Endothelial cell of umbilical vein (primary cell): ENCODE measurements at regions of chr10 and their contacts with region 1.

Region 1: DNA sequence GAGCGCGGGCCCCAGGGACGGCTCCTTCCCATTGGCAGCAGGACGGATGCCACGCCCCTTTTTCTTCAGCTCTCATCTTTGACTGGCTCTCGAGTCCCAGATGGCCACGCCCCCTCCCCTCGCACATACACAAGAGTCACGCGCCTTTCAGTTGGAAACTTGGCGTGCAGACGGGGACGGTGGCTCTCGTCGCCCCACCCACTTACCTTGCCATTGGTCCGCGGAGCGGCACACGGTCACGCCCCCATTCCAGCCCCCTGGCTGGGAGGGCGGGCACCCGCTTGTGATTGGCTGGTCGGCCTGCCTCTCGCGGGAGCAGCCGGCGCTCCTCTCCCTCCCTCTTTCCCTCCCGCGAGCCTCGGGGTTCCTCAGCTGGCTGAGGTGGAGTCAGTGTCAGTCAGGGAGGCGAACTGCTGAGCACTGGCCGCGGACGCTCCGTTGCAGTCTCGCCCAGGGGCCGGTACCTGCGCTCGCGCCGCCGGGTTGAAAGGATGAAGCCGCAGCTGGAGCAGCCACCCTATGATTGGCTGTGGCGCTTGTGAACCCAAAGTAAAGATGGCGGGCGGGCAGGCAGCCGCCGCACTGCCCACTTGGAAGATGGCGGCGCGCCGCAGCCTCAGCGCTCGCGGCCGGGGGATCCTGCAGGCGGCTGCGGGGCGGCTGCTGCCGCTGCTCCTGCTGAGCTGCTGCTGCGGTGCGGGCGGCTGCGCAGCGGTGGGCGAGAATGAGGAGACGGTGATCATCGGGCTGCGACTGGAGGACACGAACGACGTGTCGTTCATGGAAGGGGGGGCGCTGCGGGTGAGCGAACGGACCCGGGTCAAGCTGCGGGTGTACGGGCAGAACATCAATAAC is at the start of gene CNNM2:
- DNase-seq: peak; percentile 100
- H3K4me3 ChIP-seq: peak within 1 kb of the TSS; percentile 43 to 76 (median 47)
- H3K27ac ChIP-seq: peak within 1 kb of the TSS; percentile 57
- H3K4me1 ChIP-seq: peaks cover 10% of the 10 kb centered on the region
- H3K27me3 ChIP-seq: peaks cover 13 to 15% of the 10 kb centered on the region in 2 experiments
- CTCF ChIP-seq: no peak
- POLR2A ChIP-seq: peak; percentile 59
- total RNA-seq, gene CNNM2: 3.0 and 3.2 TPM in 2 replicates

Region 2: DNA sequence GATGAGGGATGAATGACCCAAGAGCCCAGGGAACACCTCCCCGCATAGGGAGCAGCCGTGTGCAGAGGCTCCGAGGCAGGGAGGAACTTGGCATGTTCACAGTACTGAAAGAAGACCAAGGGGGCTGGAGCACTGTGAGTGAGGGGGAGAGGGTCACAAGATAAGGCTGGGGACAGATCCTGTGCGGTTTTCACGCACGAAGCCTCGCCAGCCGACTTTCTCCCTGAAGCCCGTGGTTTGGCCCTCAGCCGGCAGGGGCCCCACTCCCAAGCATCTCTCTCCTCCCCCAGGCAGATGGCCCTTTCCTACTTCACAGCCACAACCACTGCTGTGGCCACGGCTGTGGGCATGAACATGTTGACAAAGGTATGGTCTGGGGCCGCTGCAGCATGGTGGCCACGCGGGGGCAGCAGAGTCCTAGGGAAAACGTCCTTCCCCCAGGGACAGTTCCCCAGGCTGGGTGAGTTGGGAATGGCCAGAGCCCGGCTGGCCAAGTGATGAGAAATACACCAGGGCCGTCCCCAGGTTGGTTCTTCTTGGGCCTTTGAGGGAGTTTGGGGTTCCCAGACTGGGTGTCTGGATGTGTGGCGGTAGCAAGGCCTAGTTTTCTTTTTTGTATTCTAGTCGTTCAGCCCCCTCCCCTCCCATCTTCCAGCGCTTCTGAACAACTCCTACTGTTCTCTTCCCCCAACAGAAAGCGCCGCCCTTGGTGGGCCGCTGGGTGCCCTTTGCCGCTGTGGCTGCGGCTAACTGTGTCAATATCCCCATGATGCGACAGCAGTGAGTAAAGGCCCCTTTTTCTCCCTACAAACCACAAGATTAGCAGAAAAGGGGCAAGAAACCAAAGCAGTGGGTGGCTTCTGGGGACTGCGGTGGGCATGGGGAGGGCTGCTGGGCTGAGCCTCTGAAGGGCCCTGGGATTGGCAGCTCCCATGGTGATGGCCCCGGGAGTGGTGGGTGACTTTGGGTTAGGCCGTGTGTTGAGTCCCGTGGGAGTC is 188.9 kb before region 1 on chr10:
- CTCF ChIA-PET with region 1: interaction called, 4 read pairs
- POLR2A ChIA-PET with region 1: no interaction called
- dilution Hi-C with region 1: no loop called
- intact Hi-C with region 1: loop called (anchors 5 kb)
- DNase-seq: peak; percentile 78
- H3K4me3 ChIP-seq: no peak overlapping the region
- H3K27ac ChIP-seq: no peak overlapping the region
- H3K4me1 ChIP-seq: no peaks in the 10 kb centered on the region
- H3K27me3 ChIP-seq: no peaks in the 10 kb centered on the region
- CTCF ChIP-seq: peak; percentile 90 to 92
- POLR2A ChIP-seq: no peak

Region 3: GRCh38 chr10:102743588-102744373 is 174.4 kb before region 1 on chr10 and contains the start of gene WBP1L:
- CTCF ChIA-PET with region 1: interaction called, 3 read pairs
- POLR2A ChIA-PET with region 1: no interaction called
- dilution Hi-C with region 1: no loop called
- intact Hi-C with region 1: loop called (anchors 5 kb)
- DNase-seq: peak; percentile 100
- H3K4me3 ChIP-seq: peak within 1 kb of the TSS; percentile 43 to 91 (median 52)
- H3K27ac ChIP-seq: peak within 1 kb of the TSS; percentile 35
- H3K4me1 ChIP-seq: peaks cover 15% of the 10 kb centered on the region
- H3K27me3 ChIP-seq: no peaks in the 10 kb centered on the region
- CTCF ChIP-seq: no peak
- POLR2A ChIP-seq: peak; percentile 45
- total RNA-seq, gene WBP1L: 43.6 and 46.0 TPM in 2 replicates

Region 4: GRCh38 chr10:102835007-102835482 is 83.1 kb before region 1 on chr10:
- CTCF ChIA-PET with region 1: interaction called, 34 read pairs
- POLR2A ChIA-PET with region 1: no interaction called
- dilution Hi-C with region 1: no loop called
- intact Hi-C with region 1: no loop called
- DNase-seq: peak; percentile 80
- H3K4me3 ChIP-seq: no peak overlapping the region
- H3K27ac ChIP-seq: no peak overlapping the region
- H3K4me1 ChIP-seq: no peaks in the 10 kb centered on the region
- H3K27me3 ChIP-seq: peaks cover 0 to 4% of the 10 kb centered on the region in 2 experiments
- CTCF ChIP-seq: peak; percentile 82 to 85
- POLR2A ChIP-seq: no peak

Region 5: DNA sequence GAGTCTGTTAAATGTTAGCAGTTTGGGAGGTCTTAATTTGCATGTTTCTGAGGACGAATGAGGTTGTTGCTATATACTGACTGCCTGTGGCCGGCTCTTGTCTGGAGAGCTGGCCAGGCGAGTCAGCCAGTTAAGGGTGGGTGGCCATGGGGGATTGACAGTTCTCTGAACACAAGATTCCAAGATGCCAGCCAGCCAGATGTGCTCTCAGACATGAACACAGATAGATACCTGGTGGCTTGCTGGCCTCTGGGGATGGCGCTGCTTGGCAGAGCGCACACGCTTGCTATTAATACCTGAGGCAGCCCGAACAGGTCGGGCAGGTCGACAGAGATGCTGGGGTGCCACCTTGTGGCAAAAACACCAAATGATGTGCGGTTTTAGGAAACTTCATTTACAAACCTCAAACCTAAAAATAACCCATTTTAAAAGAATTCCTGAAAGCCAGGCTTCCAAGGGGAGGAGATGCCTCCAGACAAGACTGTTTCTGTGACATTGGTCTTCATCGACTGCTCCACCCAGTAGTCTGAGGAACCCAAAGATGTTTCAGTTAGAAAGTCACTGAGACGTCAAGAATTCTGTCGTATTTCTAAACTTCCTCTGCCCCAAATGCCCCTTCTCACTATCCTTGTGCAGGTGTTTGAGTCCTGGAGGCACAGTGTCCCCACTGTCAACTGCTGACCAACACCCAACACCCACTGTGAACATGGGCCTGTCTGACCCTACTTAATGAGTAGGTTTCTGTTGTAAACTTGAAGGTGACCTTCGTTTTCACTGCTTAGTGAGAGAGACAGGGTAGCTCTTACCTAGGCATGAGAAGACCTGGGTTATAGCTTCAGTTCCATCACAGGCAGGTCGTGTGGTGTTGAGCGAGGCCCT is 151.5 kb after region 1 on chr10:
- CTCF ChIA-PET with region 1: interaction called, 40 read pairs
- POLR2A ChIA-PET with region 1: no interaction called
- dilution Hi-C with region 1: no loop called
- intact Hi-C with region 1: loop called (anchors 1 kb)
- DNase-seq: peak; percentile 56
- H3K4me3 ChIP-seq: no peak overlapping the region
- H3K27ac ChIP-seq: no peak overlapping the region
- H3K4me1 ChIP-seq: peaks cover 2% of the 10 kb centered on the region
- H3K27me3 ChIP-seq: no peaks in the 10 kb centered on the region
- CTCF ChIP-seq: peak; percentile 49 to 55
- POLR2A ChIP-seq: no peak

Region 6: DNA sequence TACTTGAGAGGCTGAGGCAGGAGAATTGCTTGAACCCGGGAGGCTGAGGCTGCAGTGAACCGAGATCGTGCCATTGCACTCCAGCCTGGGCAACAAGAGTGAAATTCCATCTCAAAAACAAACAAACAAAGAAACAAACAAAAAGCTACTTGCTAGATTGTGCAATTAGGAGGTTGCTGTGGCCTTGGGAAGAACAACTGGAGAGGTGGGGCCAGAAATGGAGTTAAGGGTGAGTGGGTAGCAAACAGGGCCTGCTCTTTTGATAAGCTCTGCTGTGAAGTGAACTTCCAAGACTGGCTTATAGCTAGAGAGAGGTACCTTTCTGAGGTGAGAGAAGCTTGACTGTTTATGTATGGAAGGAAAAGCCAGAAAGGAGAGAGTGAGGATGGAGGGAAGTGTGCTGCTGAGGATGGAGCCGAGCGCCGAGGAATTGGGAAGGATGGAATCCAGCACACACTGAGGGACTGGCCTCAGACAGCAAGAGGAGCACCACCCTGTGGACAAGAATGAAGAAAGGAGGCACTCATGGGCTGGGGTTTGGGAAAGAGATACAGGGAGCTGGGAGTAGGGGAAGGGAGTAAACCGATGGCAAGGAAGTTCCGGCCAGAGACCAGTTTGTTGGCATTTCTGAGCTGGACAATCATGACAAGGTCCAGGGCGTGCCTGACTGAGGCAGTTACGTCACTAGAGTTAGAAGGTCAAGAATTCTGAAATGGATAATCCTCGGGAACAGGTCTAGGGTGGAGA is 320.5 kb after region 1 on chr10:
- CTCF ChIA-PET with region 1: interaction called, 211 read pairs
- POLR2A ChIA-PET with region 1: interaction called, 3 read pairs
- dilution Hi-C with region 1: no loop called
- intact Hi-C with region 1: no loop called
- DNase-seq: peak; percentile 52
- H3K4me3 ChIP-seq: no peak overlapping the region
- H3K27ac ChIP-seq: no peak overlapping the region
- H3K4me1 ChIP-seq: peaks cover 13% of the 10 kb centered on the region
- H3K27me3 ChIP-seq: no peaks in the 10 kb centered on the region
- CTCF ChIP-seq: peak; percentile 25 to 50
- POLR2A ChIP-seq: no peak

Region 7: DNA sequence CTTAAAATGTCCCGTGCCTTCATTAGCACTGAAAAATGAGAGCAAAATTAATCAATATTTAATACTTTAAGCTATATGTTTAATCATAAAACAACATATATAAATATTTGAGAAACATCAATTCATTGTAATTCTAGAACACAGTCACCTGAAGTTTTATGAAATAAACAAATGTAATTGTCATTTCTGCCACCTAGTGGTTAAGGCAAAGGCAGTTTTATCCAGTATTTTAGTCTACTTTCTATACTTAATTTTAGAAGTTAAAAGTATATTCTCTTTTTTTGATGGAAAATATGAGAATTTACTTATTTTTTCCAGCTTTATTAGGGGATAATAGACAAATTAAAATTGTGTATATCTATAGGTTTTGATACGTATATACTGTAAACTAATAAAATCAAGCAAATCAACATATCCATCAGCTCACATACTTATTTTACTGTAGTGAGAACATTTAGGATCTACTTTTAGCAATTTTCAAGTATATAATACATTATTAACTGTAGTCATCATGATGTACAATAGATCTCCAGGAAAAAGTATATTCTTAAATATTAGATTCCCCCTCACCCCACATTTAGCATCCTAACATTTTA is 415.8 kb after region 1 on chr10:
- CTCF ChIA-PET with region 1: interaction called, 29 read pairs
- POLR2A ChIA-PET with region 1: no interaction called
- dilution Hi-C with region 1: no loop called
- intact Hi-C with region 1: loop called (anchors 1 kb)
- DNase-seq: peak; percentile 33
- H3K4me3 ChIP-seq: no peak overlapping the region
- H3K27ac ChIP-seq: no peak overlapping the region
- H3K4me1 ChIP-seq: no peaks in the 10 kb centered on the region
- H3K27me3 ChIP-seq: no peaks in the 10 kb centered on the region
- CTCF ChIP-seq: peak; percentile 23 to 47
- POLR2A ChIP-seq: no peak